A673 (cell line): ENCODE measurements at regions of chr22 and their contacts with region 1.

Region 1: GRCh38 chr22:43346521-43346929 is 3.4 kb upstream of the SCUBE1 start:
- DNase-seq: peak; percentile 52
- H3K4me3 ChIP-seq: no peak overlapping the region
- H3K27ac ChIP-seq: no peak overlapping the region
- H3K4me1 ChIP-seq: no peaks in the 10 kb centered on the region
- H3K27me3 ChIP-seq: peaks cover 27% of the 10 kb centered on the region
- CTCF ChIP-seq: peak; percentile 74

Region 2: DNA sequence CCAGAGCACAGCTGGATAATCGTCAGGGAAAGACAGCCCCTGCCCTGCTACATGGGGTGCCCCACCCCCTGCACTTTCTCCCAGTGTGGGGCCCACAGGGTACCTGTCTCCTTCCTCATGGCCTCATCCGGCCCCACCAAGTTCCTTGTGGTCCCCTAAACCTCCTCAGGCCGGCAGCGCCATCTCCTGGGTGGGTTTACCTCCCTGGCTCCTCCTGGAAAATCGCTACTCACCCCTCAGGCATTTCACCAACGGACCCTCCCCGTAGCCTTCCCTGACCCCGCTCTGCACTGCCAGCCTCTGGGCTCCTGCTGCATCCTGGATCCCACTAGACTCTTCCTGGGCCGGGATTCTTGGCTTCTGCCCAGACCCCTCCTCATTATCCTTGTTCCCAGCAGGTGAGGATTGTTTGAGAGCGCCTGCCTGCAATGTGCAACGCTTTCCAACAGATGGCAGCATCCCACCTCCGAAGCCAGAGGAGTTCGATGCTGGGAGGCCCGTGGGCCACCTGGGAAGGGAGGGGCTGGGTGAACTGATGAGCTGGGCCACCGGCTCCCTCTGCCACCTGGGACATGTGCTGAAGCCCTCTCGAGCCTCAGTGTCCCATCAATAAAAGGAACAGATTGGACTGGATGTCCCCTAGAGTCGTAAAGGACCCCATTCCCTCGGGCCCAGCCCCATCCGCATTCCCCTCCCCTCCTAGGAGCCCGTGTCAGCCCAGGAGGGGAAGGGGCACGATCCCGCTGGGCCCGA is 115.4 kb before region 1 on chr22:
- CTCF ChIA-PET with region 1: interaction called, 12 read pairs
- POLR2A ChIA-PET with region 1: no interaction called
- intact Hi-C with region 1: loop called (anchors 1 kb)
- DNase-seq: peak; percentile 71
- H3K4me3 ChIP-seq: no peak overlapping the region
- H3K27ac ChIP-seq: no peak overlapping the region
- H3K4me1 ChIP-seq: peaks cover 13% of the 10 kb centered on the region
- H3K27me3 ChIP-seq: no peaks in the 10 kb centered on the region
- CTCF ChIP-seq: peak; percentile 97

Region 3: DNA sequence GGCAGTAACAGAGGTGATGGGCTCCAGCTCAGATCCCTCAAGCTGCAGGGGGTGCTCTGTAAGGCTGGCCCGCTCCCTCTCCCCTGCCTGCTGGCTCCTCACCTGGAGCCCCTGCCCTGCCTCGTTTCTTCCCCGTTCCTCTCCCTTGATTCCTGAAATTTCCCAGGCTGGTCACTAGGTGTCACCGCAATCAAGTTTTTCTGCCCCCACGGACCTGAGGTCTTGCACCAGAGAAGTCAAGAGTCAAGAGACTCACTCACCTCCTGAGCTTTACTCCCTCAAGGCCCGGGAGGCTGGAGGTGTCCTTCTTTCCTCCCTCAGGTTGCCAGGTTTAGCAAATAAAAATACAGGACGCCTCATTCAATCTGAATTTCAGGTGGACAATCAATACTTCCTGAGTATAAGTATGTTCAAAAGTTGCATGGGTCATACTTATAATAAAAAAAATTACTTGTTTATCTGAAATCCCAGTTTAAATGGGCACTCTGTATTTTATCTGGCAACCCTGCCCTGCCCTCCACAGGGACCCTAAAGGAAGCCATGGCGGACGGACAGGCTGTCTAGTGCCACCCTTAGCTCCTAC is 72.5 kb before region 1 on chr22:
- CTCF ChIA-PET with region 1: interaction called, 38 read pairs
- POLR2A ChIA-PET with region 1: no interaction called
- intact Hi-C with region 1: loop called (anchors 1 kb)
- DNase-seq: peak; percentile 54
- H3K4me3 ChIP-seq: no peak overlapping the region
- H3K27ac ChIP-seq: no peak overlapping the region
- H3K4me1 ChIP-seq: no peaks in the 10 kb centered on the region
- H3K27me3 ChIP-seq: no peaks in the 10 kb centered on the region
- CTCF ChIP-seq: peak; percentile 82

Region 4: GRCh38 chr22:43412808-43413795 is 66.6 kb after region 1 on chr22:
- CTCF ChIA-PET with region 1: no interaction called
- POLR2A ChIA-PET with region 1: no interaction called
- intact Hi-C with region 1: no loop called
- DNase-seq: no peak
- H3K4me3 ChIP-seq: no peak overlapping the region
- H3K27ac ChIP-seq: no peak overlapping the region
- H3K4me1 ChIP-seq: no peaks in the 10 kb centered on the region
- H3K27me3 ChIP-seq: peaks cover 79% of the 10 kb centered on the region
- CTCF ChIP-seq: no peak